Activated T-helper 2 cell treated with anti-CD3 and anti-CD28 coated beads, Interferon-gamma antibody, Interleukin-2, Interleukin-4, amounts not matched to agents 10 μg/mL and 5 μg/mL and 100 μg/mL, durations not matched to agents 14 hours and 24 hours and 36 hours (primary cell): ENCODE measurements at regions of chr14 and their contacts with region 1.

Region 1: GRCh38 chr14:21103710-21104447 is 3.0 kb downstream of the TMEM253 start:
- DNase-seq: peak; percentile 91
- H3K4me3 Mint-ChIP-seq: peak overlapping the region; percentile 95
- H3K27ac Mint-ChIP-seq: peak overlapping the region; percentile 85
- H3K4me1 Mint-ChIP-seq: peaks cover 44% of the 10 kb centered on the region
- H3K27me3 Mint-ChIP-seq: peaks cover 3% of the 10 kb centered on the region

Region 2: DNA sequence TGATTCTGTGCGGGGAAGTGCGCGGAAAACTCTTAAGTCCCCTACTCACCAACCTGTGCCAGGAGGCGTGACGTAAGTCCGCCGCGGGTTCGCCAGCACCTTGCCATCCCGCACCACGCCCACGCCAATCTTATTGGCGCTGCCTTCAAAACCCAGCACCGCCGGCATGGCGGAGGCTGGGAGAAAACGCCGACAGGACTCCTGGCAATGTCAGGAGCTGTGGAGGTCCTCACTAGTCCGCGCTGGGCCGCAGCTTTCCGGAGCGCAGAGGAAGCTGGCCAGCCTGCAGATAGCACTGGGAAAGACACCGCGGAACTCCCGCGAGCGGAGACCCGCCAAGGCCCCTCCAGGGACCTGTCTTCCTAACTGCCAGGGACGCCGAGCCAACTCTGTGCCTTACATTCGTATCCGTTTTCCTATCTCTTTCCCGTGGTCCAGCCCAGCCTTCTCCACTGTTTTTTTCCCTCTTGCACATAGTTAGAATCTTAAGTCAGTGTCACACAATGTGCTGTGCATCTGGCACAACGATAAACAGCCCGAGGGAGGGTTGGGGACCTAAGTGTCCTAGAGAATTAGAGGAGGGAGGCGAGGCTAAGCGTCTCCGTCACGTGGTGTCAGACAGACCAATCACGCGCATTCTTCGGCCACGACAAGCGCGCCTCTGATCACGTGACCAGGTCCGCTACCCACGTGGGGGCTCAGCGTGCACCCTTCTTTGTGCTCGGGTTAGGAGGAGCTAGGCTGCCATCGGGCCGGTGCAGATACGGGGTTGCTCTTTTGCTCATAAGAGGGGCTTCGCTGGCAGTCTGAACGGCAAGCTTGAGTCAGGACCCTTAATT is 649.1 kb before region 1 on chr14 and contains the starts of genes APEX1 and OSGEP:
- intact Hi-C with region 1: loop called (anchors 5 kb)
- DNase-seq: peak; percentile 97
- H3K4me3 Mint-ChIP-seq: peak within 1 kb of the TSS; percentile 63
- H3K27ac Mint-ChIP-seq: no peak within 1 kb of the TSS
- H3K4me1 Mint-ChIP-seq: peaks cover 11% of the 10 kb centered on the region
- H3K27me3 Mint-ChIP-seq: no peaks in the 10 kb centered on the region
- total RNA-seq, gene APEX1: 217 and 228 TPM in 2 replicates
- total RNA-seq, gene OSGEP: 66.0 and 66.5 TPM in 2 replicates

Region 3: DNA sequence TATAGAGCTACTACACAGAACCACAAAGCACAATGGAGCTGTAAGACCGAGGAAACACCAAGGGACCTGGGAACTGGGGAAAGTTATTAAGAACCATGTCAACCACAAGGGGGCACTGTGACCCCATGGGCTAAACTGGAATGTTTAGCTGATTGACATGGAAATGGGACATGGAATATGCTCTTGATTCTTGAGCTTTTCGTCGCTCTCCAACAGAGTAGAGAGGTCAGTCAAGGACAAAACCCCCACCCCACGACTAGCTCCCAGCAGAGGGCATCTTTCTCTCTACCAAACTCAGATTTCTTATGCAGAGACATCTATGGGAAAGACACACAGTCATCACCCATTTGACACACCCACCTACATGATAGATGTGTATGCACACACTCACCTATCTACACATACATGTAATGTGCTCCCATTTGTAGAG is 89.1 kb before region 1 on chr14:
- intact Hi-C with region 1: loop called (anchors 1 kb)
- DNase-seq: peak; percentile 53
- H3K4me3 Mint-ChIP-seq: no peak overlapping the region
- H3K27ac Mint-ChIP-seq: no peak overlapping the region
- H3K4me1 Mint-ChIP-seq: no peaks in the 10 kb centered on the region
- H3K27me3 Mint-ChIP-seq: peaks cover 15% of the 10 kb centered on the region

Region 4: GRCh38 chr14:21068521-21069387 is 35.1 kb before region 1 on chr14:
- intact Hi-C with region 1: loop called (anchors 2 kb)
- DNase-seq: no peak
- H3K4me3 Mint-ChIP-seq: peak overlapping the region; percentile 64
- H3K27ac Mint-ChIP-seq: no peak overlapping the region
- H3K4me1 Mint-ChIP-seq: peaks cover 30% of the 10 kb centered on the region
- H3K27me3 Mint-ChIP-seq: peaks cover 78% of the 10 kb centered on the region

Region 5: DNA sequence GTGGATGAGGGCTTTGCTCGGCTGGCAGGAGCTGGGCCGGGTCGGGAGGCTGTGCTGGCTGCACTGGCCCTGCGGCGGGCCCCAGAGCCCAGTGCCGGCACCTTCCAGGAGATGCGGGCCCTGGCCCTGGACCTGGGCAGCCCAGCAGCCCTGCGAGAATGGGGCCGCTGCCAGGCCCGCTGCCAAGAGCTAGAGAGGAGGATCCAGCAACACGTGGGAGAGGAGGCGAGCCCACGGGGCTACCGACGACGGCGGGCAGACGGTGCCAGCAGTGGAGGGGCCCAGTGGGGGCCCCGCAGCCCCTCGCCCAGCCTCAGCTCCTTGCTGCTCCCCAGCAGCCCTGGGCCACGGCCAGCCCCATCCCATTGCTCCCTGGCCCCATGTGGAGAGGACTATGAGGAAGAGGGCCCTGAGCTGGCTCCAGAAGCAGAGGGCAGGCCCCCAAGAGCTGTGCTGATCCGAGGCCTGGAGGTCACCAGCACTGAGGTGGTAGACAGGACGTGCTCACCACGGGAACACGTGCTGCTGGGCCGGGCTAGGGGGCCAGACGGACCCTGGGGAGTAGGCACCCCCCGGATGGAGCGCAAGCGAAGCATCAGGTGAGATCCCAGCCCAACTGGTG is 22.2 kb before region 1 on chr14:
- intact Hi-C with region 1: no loop called
- DNase-seq: no peak
- H3K4me3 Mint-ChIP-seq: no peak overlapping the region
- H3K27ac Mint-ChIP-seq: no peak overlapping the region
- H3K4me1 Mint-ChIP-seq: peaks cover 3% of the 10 kb centered on the region
- H3K27me3 Mint-ChIP-seq: peaks cover 4% of the 10 kb centered on the region

Region 6: DNA sequence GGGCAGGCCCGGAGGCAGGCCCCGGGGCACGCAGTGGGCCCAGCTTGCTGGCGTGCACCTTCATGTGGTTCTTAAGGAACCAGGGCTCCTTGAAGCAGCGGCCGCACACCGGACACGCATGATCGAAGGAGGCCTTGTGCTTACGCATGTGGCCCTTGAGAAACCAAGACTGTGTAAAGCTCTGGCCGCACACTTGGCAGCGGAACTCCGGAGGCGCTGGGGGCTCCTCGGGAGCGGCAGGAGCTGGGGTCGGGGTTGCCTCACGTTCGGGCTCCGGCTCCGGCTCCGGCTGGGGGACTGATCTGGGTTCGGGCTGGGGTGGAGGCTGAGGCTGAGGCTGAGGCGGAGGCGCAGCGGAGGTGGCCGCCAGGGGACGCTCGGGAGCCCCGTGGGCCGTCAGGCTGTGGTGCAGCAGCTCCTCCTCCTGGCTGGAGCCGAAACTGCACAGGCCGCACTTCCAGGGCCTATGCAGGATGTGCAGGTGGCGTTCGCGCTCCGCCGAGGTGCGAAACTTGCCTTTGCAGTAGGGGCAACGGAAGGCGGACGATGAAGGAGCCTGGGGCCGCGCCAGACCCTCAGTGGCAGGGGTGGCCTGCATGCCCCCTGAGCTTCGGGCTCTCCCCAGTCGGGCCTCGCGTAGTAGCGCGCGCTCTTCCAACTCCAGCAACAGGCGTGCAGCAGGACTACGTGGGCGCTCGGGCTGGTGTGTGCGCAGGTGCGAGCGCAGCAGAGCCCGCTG is 11.4 kb before region 1 on chr14:
- intact Hi-C with region 1: loop called (anchors 1 kb)
- DNase-seq: peak; percentile 83
- H3K4me3 Mint-ChIP-seq: no peak overlapping the region
- H3K27ac Mint-ChIP-seq: no peak overlapping the region
- H3K4me1 Mint-ChIP-seq: peaks cover 11% of the 10 kb centered on the region
- H3K27me3 Mint-ChIP-seq: peaks cover 11% of the 10 kb centered on the region

Region 7: DNA sequence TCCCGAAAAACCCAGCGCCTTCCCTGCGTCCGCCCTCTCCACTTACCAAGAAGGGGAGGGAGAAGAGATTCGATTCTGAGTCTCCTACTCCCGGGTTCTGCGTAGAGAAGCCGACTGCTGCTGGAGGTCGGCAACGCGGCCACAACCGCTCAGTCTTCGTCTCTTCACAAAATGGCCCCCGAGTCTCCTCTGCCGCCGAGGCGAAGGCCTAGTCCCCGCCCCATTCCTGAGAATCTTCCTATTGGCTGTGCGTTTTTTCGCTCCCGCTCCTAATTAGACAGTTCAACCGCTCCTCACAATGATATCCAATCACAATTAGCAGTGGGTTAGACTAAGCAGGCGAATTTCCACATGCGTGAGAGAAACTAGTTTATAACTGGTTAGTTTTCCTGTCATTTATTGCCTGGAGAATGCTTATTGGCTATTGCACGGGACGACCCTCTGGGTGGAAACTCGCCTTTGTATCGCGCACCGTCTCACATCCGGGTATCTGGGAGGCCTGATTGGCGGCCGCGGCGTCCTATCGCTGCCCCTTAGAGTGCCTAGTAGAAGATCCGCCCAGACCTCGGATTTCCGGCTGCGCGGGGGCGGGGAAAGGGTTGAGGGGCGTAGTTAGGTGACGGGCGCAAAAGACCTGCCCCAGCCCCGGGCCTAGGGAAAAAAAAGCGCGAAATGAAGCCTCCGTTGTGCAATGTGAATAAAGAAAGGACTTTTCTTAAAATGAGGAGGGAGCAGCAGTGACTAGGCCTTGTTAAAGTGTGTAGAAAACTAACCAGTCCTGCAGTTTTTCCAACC is 165.6 kb after region 1 on chr14 and contains the start of gene HNRNPC:
- intact Hi-C with region 1: loop called (anchors 5 kb)
- DNase-seq: peak; percentile 100
- H3K4me3 Mint-ChIP-seq: peak within 1 kb of the TSS; percentile 99
- H3K27ac Mint-ChIP-seq: peak within 1 kb of the TSS; percentile 100
- H3K4me1 Mint-ChIP-seq: peaks cover 29% of the 10 kb centered on the region
- H3K27me3 Mint-ChIP-seq: no peaks in the 10 kb centered on the region
- total RNA-seq, gene HNRNPC: 972 and 976 TPM in 2 replicates